Activated T-helper 1 cell treated with anti-CD3 and anti-CD28 coated beads, Interleukin-12 subunit alpha, Interleukin-12 subunit beta, Interleukin-2, Interleukin-4 antibody, amounts not matched to agents 30 ng/mL and 10 ng/mL and 1 ng/mL, durations not matched to agents 14 hours and 24 hours and 36 hours (primary cell): ENCODE measurements at regions of chr7 and their contacts with region 1.

Region 1: GRCh38 chr7:139104091-139104450 is 5.4 kb downstream of the ZC3HAV1 start:
- DNase-seq: no peak
- H3K4me3 Mint-ChIP-seq: peak overlapping the region; percentile 87
- H3K27ac Mint-ChIP-seq: peak overlapping the region; percentile 92
- H3K4me1 Mint-ChIP-seq: peaks cover 52% of the 10 kb centered on the region
- H3K27me3 Mint-ChIP-seq: no peaks in the 10 kb centered on the region

Region 2: GRCh38 chr7:138278601-138279000 is 825.5 kb before region 1 on chr7:
- intact Hi-C with region 1: no loop called
- DNase-seq: no peak
- H3K4me3 Mint-ChIP-seq: no peak overlapping the region
- H3K27ac Mint-ChIP-seq: no peak overlapping the region
- H3K4me1 Mint-ChIP-seq: no peaks in the 10 kb centered on the region
- H3K27me3 Mint-ChIP-seq: no peaks in the 10 kb centered on the region

Region 3: GRCh38 chr7:139084709-139085108 is 19.4 kb before region 1 on chr7:
- intact Hi-C with region 1: loop called (anchors 1 kb)
- DNase-seq: no peak
- H3K4me3 Mint-ChIP-seq: no peak overlapping the region
- H3K27ac Mint-ChIP-seq: peak overlapping the region; percentile 88
- H3K4me1 Mint-ChIP-seq: peaks cover 84% of the 10 kb centered on the region
- H3K27me3 Mint-ChIP-seq: no peaks in the 10 kb centered on the region

Region 4: GRCh38 chr7:139153832-139154231 is 49.8 kb after region 1 on chr7:
- intact Hi-C with region 1: no loop called
- DNase-seq: no peak
- H3K4me3 Mint-ChIP-seq: no peak overlapping the region
- H3K27ac Mint-ChIP-seq: no peak overlapping the region
- H3K4me1 Mint-ChIP-seq: peaks cover 9% of the 10 kb centered on the region
- H3K27me3 Mint-ChIP-seq: peaks cover 2% of the 10 kb centered on the region

Region 5: GRCh38 chr7:139753081-139753692 is 649.1 kb after region 1 on chr7:
- intact Hi-C with region 1: no loop called
- DNase-seq: no peak
- H3K4me3 Mint-ChIP-seq: no peak overlapping the region
- H3K27ac Mint-ChIP-seq: no peak overlapping the region
- H3K4me1 Mint-ChIP-seq: peaks cover 41% of the 10 kb centered on the region
- H3K27me3 Mint-ChIP-seq: peaks cover 2% of the 10 kb centered on the region